Vagina (tissue), 2 donors: ENCODE measurements at regions of chr3 and their contacts with region 1.

Region 1: GRCh38 chr3:42698911-42699230 is 3.7 kb downstream of the HHATL start:
- DNase-seq: peak in 1 of 2 donors; percentile 70
- H3K4me3 ChIP-seq: no peak overlapping the region
- H3K27ac ChIP-seq: no peak overlapping the region
- H3K4me1 ChIP-seq: no peaks in the 10 kb centered on the region
- H3K27me3 ChIP-seq: no peaks in the 10 kb centered on the region
- CTCF ChIP-seq: no peak
- POLR2A ChIP-seq: no peak

Region 2: GRCh38 chr3:43733459-43734384 is 1034.9 kb after region 1 on chr3:
- intact Hi-C with region 1: loop called (anchors 5 kb)
- DNase-seq: no peak
- H3K4me3 ChIP-seq: no peak overlapping the region
- H3K27ac ChIP-seq: no peak overlapping the region
- H3K4me1 ChIP-seq: no peaks in the 10 kb centered on the region
- H3K27me3 ChIP-seq: no peaks in the 10 kb centered on the region
- CTCF ChIP-seq: no peak
- POLR2A ChIP-seq: no peak